Caco-2 (cell line): ENCODE measurements at regions of chr12 and their contacts with region 1.

Region 1: GRCh38 chr12:51970904-51971646 is 19.6 kb downstream of the ACVR1B start:
- DNase-seq: peak; percentile 53 to 62
- H3K4me3 ChIP-seq: no peak overlapping the region
- H3K4me3 Mint-ChIP-seq: no peak overlapping the region
- H3K27ac Mint-ChIP-seq: peak overlapping the region; percentile 10
- H3K4me1 ChIP-seq: peaks cover 69% of the 10 kb centered on the region
- H3K4me1 Mint-ChIP-seq: peaks cover 56% of the 10 kb centered on the region
- H3K27me3 ChIP-seq: no peaks in the 10 kb centered on the region
- H3K27me3 Mint-ChIP-seq: no peaks in the 10 kb centered on the region
- CTCF ChIP-seq: peak; percentile 68 to 74

Region 2: DNA sequence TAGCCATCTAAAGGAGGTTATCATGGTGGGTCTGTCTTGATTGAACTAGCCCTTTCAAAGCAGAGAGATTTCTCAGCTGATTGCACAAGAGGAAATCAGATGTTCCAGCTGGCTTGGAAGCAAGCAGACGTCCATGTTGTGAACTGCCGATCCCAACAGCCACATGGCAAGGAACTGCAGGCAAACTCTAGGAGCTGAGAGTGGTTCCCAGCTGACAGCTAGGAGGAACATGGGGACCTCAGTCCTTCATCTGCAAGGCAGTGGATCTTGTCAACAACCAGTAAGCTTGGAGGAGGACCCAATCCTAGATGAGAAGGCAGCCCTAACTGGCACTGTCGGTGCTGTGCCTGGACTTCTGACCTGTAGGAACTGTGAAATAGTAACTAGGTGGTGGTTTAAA is 11.9 kb before region 1 on chr12:
- CTCF ChIA-PET with region 1: interaction called, 26 read pairs
- POLR2A ChIA-PET with region 1: interaction called, 4 read pairs
- intact Hi-C with region 1: no loop called
- DNase-seq: peak; percentile 54 to 60
- H3K4me3 ChIP-seq: no peak overlapping the region
- H3K4me3 Mint-ChIP-seq: peak overlapping the region; percentile 42
- H3K27ac Mint-ChIP-seq: peak overlapping the region; percentile 77
- H3K4me1 ChIP-seq: peaks cover 84% of the 10 kb centered on the region
- H3K4me1 Mint-ChIP-seq: peaks cover 58% of the 10 kb centered on the region
- H3K27me3 ChIP-seq: no peaks in the 10 kb centered on the region
- H3K27me3 Mint-ChIP-seq: no peaks in the 10 kb centered on the region
- CTCF ChIP-seq: no peak

Region 3: DNA sequence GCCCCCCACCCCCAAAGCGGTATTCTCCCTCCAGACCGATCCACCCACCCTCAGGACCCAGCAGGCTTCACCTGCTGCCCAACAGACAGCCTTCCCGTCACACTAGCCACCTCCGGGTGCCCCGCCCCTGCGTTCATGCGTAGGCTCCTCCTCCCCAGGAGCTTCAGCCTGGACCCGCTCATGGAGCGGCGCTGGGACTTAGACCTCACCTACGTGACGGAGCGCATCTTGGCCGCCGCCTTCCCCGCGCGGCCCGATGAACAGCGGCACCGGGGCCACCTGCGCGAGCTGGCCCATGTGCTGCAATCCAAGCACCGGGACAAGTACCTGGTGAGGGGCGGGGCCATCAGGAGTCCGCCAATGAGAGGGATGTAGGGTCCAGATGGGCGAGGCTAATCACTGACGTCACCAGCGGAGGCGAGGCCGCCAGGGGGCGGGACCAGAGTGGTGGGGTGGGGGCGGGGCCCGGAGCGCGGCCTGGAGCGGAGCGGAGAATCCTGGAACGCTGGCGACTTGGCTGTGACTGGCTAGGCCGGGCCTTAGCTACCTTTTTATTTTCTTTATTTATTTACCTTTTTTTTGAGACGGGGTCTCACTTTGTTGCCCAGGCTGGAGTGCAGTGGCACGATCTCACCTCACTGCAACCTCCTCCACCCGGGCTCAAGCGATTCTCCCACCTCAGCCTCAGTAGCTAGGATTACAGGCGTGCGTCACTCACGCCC is 1083.2 kb after region 1 on chr12:
- CTCF ChIA-PET with region 1: no interaction called
- POLR2A ChIA-PET with region 1: no interaction called
- intact Hi-C with region 1: no loop called
- DNase-seq: peak; percentile 96 to 98
- H3K4me3 ChIP-seq: peak overlapping the region; percentile 78
- H3K4me3 Mint-ChIP-seq: peak overlapping the region; percentile 98
- H3K27ac Mint-ChIP-seq: peak overlapping the region; percentile 97
- H3K4me1 ChIP-seq: peaks cover 40% of the 10 kb centered on the region
- H3K4me1 Mint-ChIP-seq: peaks cover 14% of the 10 kb centered on the region
- H3K27me3 ChIP-seq: no peaks in the 10 kb centered on the region
- H3K27me3 Mint-ChIP-seq: no peaks in the 10 kb centered on the region
- CTCF ChIP-seq: no peak